ENCODE measurements at regions of chr4 and their contacts with region 1.

Region 1: DNA sequence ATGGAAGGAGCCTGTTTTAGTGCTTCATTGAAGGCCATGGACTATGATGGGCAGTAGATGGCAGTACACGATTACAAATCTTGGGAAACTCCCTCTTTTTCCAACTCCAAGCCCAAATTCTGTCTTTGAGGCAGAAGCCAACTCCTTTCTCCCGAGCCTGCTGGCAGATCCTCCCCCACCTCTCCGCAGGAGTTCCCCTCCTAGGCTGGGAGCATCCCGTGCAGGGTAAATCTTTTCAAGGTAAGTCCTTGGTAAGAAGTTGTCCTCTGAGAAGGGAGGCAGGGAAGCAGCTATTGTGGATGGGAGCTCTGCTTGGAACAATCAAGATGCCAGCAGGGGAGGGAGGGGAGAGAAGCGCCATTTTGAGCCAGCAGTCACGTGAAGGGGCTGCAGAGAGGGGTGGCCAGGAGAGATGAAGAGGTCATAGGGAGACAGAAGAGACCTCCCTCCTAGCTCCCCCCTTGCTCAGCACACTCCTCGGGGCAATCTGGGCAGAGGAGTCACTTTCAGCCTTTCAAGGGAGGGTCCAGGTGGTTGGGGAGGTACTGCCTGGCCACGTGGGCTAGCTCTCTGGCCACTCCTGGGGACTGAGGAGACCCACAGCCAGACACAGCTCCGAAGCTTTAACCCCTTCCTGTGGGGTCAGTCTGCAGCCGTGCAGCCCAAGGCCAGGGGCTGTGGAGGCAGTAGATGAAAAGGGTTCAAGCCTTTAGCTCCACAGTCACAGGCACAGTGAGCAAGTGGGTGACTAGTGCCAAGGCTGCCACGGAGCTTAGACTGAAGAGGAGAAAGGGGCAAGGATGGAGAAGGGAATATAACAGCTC is 9.6 kb downstream of the CC2D2A start:
- DNase-seq: peak; percentile 31
- ATAC-seq: peak; percentile 90 to 91

Region 2: GRCh38 chr4:15649914-15650545 is 170.7 kb after region 1 on chr4:
- intact Hi-C with region 1: loop called in 1 of 2 experiments (anchors 5 kb)
- DNase-seq: peak; percentile 26
- ATAC-seq: peak; percentile 40 to 52

Region 3: DNA sequence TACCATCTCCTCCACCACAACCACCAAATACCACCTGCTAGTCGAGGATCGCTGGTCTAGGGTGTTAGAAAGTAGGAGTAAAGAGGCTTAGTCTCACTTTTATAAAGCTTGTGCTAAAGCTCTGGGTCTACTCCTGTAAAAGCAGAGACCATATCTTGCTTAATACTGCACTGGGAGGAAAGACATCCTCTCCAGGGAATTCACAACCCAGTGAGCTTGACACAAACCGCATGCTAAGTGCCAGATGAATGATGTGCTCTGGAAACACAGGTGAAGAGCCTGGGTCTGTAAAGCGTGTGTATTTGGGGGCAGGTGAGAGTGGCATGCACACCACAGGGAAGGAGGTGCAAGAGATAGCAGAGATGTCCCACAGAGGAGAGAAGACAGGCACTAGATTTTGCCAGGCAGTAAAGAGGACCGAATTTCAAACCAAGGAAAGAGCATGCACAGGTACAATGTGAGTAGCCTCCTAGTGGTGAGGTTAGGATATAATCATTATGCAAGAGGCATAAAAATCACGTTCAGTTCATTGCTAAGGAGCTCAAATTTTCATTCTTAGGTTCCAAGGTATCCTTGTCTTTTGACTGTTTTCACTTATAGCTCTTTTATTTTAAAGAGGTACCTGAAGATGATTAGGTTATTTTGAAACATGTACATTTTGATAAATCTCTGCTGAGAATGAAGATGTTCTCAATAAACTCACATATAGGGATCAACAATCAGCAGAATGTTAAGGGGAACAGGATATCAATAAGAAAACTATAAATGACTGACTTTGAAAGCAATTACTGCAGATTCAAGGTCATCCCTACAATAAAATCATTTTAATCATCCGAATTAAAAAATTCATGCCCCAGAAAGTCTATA is 726.2 kb after region 1 on chr4:
- intact Hi-C with region 1: no loop called
- DNase-seq: no peak
- ATAC-seq: peak; percentile 44 to 51

Measured in left cardiac atrium (tissue), 4 donors.